ENCODE measurements at regions of chr6 and their contacts with region 1.

Region 1: GRCh38 chr6:6547110-6547879 is 41.2 kb upstream of the LY86 start:
- DNase-seq: peak; percentile 84 to 88
- H3K4me3 ChIP-seq: peak overlapping the region in 1 of 3 donors; percentile 25
- H3K27ac ChIP-seq: no peak overlapping the region
- H3K4me1 ChIP-seq: peaks cover 9 to 12% of the 10 kb centered on the region in 2 donors
- H3K27me3 ChIP-seq: peaks cover 8% of the 10 kb centered on the region
- CTCF ChIP-seq: peak; percentile 86 to 94 (median 90)
- POLR2A ChIP-seq: no peak

Region 2: GRCh38 chr6:6057424-6058053 is 489.8 kb before region 1 on chr6:
- intact Hi-C with region 1: loop called (anchors 5 kb)
- DNase-seq: no peak
- H3K4me3 ChIP-seq: no peak overlapping the region
- H3K27ac ChIP-seq: no peak overlapping the region
- H3K4me1 ChIP-seq: no peaks in the 10 kb centered on the region
- H3K27me3 ChIP-seq: no peaks in the 10 kb centered on the region
- CTCF ChIP-seq: peak in 5 of 6 experiments; percentile 23 to 72 (median 68)
- POLR2A ChIP-seq: no peak

Region 3: GRCh38 chr6:6676910-6677441 is 129.7 kb after region 1 on chr6:
- intact Hi-C with region 1: no loop called
- DNase-seq: peak; percentile 76 to 78
- H3K4me3 ChIP-seq: no peak overlapping the region
- H3K27ac ChIP-seq: no peak overlapping the region
- H3K4me1 ChIP-seq: peaks cover 3 to 19% of the 10 kb centered on the region in 2 donors
- H3K27me3 ChIP-seq: no peaks in the 10 kb centered on the region
- CTCF ChIP-seq: peak; percentile 92 to 99 (median 96)
- POLR2A ChIP-seq: no peak